ENCODE measurements at regions of chr11 and their contacts with region 1.

Region 1: DNA sequence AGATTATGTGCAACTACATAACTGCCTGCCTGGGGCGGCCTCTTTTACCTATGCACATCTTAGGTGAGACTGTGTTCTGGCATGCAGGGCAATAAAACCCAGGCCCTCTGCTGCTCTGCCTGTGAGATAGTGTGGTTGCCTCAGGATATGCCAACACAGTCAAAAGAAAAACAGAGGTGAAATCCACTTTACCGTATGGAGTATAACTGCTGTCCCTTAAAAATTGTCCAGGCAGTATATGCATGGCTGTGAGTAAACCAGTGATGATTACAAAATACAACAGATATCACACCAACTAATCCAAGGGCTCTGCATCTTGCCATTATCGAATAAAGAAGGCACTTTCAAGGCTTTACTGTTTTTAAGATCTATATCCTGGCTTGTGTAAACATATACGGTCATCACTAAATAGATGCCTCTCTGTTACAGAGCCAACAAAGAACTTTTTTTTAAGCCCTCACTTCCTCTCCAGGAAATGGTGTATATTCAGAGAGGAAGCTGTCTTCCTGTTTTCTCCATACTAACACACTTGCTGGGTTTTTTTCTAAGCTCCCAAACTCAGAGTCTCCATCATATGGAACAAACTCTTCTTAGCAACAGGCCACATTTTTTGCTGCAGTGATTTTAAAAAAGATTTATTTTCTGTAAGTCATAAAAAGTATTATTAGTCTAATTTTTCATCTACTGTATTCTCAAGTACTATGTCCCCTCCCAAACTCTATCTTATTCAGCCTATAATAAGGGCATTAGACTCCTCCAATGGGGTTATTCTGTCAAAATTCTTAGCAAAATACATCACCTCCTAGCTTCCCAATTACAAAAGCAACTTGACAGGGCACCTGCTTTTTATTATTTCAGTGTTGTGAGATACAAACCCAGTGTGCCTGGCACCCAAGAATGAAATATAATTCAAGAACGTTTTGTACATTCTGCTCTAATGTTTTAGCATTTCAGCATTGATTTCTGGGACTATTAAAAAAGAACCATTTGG is 135.2 kb downstream of the MAML2 start:
- DNase-seq: peak; percentile 44
- H3K4me3 Mint-ChIP-seq: peak overlapping the region; percentile 55
- H3K27ac Mint-ChIP-seq: peak overlapping the region; percentile 91
- H3K4me1 Mint-ChIP-seq: peaks cover 85% of the 10 kb centered on the region
- H3K27me3 Mint-ChIP-seq: no peaks in the 10 kb centered on the region

Region 2: DNA sequence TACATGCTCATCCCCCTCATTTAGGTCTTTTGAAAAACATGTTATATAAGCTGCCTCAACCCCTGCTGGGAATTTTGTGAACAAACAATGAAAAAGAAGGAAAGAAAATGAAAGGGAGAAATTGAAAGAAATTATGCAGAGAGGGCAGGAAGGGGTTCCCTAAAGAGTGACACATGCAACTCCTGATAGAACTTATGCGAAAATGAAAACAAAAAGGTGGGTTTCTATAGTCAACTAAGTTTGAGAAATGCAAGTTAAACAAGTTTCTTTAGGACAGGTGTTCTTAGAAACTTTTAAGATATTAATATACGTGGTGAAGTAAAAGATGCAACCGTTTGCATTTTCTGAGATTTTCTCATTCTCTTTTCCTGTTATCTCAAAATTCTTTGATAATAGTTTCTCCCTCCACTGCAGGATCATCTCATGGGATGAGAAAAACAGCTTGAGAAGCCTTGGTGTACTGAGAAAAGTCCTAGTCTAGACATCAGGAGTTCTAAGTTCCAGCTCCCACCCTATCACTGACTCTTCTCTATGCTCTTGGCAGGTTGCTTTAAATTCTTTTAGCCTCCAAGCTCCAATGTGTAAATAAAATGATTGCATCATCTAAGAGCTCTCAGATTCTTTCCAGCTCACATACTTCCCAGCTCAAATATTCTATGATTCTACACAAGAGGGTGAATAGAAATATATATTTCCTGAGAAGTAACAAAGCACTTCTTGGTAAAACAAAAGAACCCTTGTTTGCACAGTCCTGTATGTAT is 527.4 kb before region 1 on chr11:
- CTCF ChIA-PET with region 1: no interaction called
- POLR2A ChIA-PET with region 1: no interaction called
- intact Hi-C with region 1: loop called (anchors 10 kb)
- DNase-seq: no peak
- H3K4me3 Mint-ChIP-seq: peak overlapping the region; percentile 9
- H3K27ac Mint-ChIP-seq: peak overlapping the region; percentile 45
- H3K4me1 Mint-ChIP-seq: peaks cover 85% of the 10 kb centered on the region
- H3K27me3 Mint-ChIP-seq: no peaks in the 10 kb centered on the region

Region 3: DNA sequence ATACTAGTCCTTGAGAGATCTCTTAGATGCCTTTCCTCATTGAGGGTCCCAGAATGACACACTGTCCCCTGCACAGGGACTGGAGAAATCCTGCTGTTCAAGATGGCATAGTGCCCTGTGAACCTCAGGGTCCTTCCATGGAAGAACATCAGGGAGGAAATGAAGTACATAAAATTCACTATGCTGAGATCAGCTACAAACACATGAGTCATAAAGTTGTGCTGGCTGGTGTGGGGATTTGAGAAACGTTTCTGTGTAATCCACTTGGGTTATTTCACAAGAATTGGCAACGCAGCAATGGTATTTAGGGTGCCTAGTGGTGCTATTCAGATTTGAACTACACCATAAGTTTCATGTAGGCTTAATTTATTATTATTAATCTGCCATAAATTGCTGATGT is 39.1 kb before region 1 on chr11:
- CTCF ChIA-PET with region 1: no interaction called
- POLR2A ChIA-PET with region 1: no interaction called
- intact Hi-C with region 1: no loop called
- DNase-seq: peak; percentile 42
- H3K4me3 Mint-ChIP-seq: no peak overlapping the region
- H3K27ac Mint-ChIP-seq: peak overlapping the region; percentile 76
- H3K4me1 Mint-ChIP-seq: peaks cover 61% of the 10 kb centered on the region
- H3K27me3 Mint-ChIP-seq: no peaks in the 10 kb centered on the region

Region 4: DNA sequence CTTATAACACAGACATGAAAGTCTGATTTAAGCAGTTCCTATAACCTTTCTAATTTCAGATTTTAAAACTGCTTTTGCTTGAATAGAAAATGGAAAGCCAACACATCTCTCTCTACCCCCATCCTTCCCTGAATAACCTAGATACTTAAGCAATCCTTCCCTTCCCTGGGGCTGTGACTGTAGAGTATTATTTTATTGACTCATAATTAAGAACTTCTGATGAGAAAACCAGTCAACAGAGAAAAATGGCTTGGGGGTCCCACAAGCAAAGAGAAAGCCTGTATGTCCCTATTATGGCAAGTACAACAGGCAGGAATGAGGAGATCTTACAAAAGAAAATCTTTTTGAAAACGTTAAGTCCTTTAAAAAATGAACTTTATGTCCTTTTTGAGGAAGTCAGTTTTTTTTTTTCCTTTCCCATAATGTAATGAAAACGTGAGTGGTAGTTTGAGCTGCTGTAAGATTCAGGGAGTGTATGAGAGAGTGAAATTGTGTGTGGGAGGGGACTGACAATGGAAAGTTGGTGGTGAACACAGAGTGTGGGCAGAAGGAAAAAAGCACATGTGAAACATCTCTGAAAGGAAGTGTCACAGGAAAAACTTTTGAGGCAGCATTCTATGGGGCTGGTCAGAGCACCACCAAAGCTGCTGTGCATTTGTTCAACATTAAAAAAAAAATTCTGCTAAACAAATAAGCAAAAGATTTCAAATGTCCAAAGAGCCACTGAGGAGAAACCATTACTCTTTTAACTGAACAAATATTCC is 19.3 kb before region 1 on chr11:
- CTCF ChIA-PET with region 1: interaction called, 4 read pairs
- POLR2A ChIA-PET with region 1: interaction called, 4 read pairs
- intact Hi-C with region 1: loop called (anchors 2 kb)
- DNase-seq: peak; percentile 59
- H3K4me3 Mint-ChIP-seq: peak overlapping the region; percentile 7
- H3K27ac Mint-ChIP-seq: peak overlapping the region; percentile 79
- H3K4me1 Mint-ChIP-seq: peaks cover 74% of the 10 kb centered on the region
- H3K27me3 Mint-ChIP-seq: no peaks in the 10 kb centered on the region

Region 5: GRCh38 chr11:96235751-96236150 is 28.0 kb after region 1 on chr11:
- CTCF ChIA-PET with region 1: no interaction called
- POLR2A ChIA-PET with region 1: interaction called, 4 read pairs
- intact Hi-C with region 1: loop called (anchors 1 kb)
- DNase-seq: peak; percentile 90
- H3K4me3 Mint-ChIP-seq: peak overlapping the region; percentile 58
- H3K27ac Mint-ChIP-seq: peak overlapping the region; percentile 94
- H3K4me1 Mint-ChIP-seq: peaks cover 50% of the 10 kb centered on the region
- H3K27me3 Mint-ChIP-seq: no peaks in the 10 kb centered on the region

Region 6: GRCh38 chr11:96254087-96254486 is 46.3 kb after region 1 on chr11:
- CTCF ChIA-PET with region 1: no interaction called
- POLR2A ChIA-PET with region 1: no interaction called
- intact Hi-C with region 1: loop called (anchors 2 kb)
- DNase-seq: peak; percentile 48
- H3K4me3 Mint-ChIP-seq: peak overlapping the region; percentile 46
- H3K27ac Mint-ChIP-seq: peak overlapping the region; percentile 71
- H3K4me1 Mint-ChIP-seq: peaks cover 84% of the 10 kb centered on the region
- H3K27me3 Mint-ChIP-seq: no peaks in the 10 kb centered on the region

Region 7: GRCh38 chr11:96506953-96507354 is 299.2 kb after region 1 on chr11:
- CTCF ChIA-PET with region 1: no interaction called
- POLR2A ChIA-PET with region 1: no interaction called
- intact Hi-C with region 1: no loop called
- DNase-seq: no peak
- H3K4me3 Mint-ChIP-seq: no peak overlapping the region
- H3K27ac Mint-ChIP-seq: no peak overlapping the region
- H3K4me1 Mint-ChIP-seq: no peaks in the 10 kb centered on the region
- H3K27me3 Mint-ChIP-seq: no peaks in the 10 kb centered on the region

Measured in activated CD4-positive, alpha-beta memory T cell treated with anti-CD3 and anti-CD28 coated beads for 36 hours (primary cell).